Gastrocnemius medialis (tissue), 4 donors: ENCODE measurements at regions of chr6 and their contacts with region 1.

Region 1: GRCh38 chr6:89432875-89433251 is at the start of gene ANKRD6:
- DNase-seq: peak; percentile 30 to 64
- ATAC-seq: peak; percentile 84 to 90
- H3K4me3 ChIP-seq: peak within 1 kb of the TSS; percentile 61 to 90 (median 74)
- H3K27ac ChIP-seq: peak within 1 kb of the TSS in 2 of 4 donors; percentile 34 to 56
- H3K4me1 ChIP-seq: no peaks in the 10 kb centered on the region
- H3K27me3 ChIP-seq: no peaks in the 10 kb centered on the region
- CTCF ChIP-seq: peak; percentile 79 to 97 (median 97)
- POLR2A ChIP-seq: no peak
- total RNA-seq, gene ANKRD6: 1.6 to 6.8 (median 2.9) TPM

Region 2: DNA sequence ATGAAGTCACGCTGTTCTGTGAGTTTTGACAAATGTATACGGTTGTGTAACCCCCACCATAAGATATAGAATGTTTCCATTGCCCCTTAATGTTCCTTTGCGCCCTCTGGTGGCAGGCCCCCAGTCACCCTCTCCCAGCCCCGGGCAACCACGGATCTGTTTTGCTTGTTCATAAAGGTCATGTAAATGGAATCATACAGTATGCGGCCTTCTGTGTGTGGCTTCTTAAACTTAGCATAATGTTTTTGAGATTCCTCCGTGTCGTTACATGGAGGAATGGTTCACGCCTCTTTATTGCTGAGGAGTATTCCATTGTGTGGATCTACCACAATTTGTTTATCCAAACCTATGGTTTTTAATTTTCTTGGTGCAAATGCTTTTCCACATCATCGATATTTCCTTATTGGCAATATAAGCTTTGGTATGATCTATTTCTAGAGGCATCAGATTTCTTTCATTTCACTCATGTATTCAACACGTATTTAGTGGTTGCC is 177.3 kb after region 1 on chr6:
- in situ Hi-C with region 1: loop called (anchors 5 to 10 kb)
- intact Hi-C with region 1: loop called (anchors 1 kb)
- DNase-seq: peak; percentile 23 to 45
- ATAC-seq: peak; percentile 65 to 70
- H3K4me3 ChIP-seq: no peak overlapping the region
- H3K27ac ChIP-seq: no peak overlapping the region
- H3K4me1 ChIP-seq: no peaks in the 10 kb centered on the region
- H3K27me3 ChIP-seq: no peaks in the 10 kb centered on the region
- CTCF ChIP-seq: peak; percentile 67 to 89 (median 81)
- POLR2A ChIP-seq: no peak